Psoas muscle (tissue), 8 donors: ENCODE measurements at regions of chr4 and their contacts with region 1.

Region 1: GRCh38 chr4:1693129-1693896 is 9.2 kb upstream of the FAM53A start:
- DNase-seq: peak; percentile 68 to 85
- ATAC-seq: peak; percentile 92 to 97 (median 94)
- H3K4me3 ChIP-seq: no peak overlapping the region
- H3K27ac ChIP-seq: no peak overlapping the region
- H3K4me1 ChIP-seq: peaks cover 10% of the 10 kb centered on the region
- H3K27me3 ChIP-seq: no peaks in the 10 kb centered on the region
- CTCF ChIP-seq: peak; percentile 94

Region 2: DNA sequence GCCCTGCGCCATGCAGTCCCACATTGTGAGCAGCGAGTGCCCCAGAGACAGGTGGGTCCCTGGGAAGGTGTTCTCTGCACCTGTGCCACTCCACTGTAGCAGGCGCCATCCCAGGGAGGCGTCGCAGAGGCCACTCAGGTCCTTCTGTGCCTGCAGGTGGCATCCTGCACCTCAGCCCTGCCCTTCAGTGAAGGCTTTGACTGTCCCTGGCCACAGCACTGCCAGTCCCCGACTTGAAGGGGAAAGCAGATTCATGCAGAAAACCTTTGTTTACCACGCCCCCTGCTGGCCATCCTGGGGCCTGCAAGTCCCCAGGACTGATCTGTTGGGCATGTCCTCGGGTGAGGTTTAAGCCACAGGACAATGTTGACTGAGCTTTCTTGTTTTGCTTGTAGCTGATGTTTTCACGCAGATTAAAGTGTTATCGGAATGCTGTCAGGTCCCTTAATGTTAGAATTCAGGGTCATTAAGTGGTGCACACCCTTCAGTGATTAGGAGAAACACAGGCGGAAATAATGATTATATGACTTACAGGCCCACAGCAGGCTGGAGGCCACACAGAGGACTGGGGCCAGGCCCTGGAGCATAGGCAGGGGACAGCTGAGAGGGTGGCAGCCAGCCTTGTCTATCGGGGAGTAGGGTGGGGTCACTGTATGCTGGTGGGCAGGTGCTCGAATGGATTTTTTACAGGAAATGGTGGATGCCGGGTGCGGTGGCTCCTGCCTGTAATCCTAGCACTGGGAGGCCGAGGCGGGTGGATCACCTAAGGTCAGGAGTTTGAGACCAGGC is 33.0 kb after region 1 on chr4:
- intact Hi-C with region 1: loop called (anchors 1 to 5 kb)
- DNase-seq: peak; percentile 90 to 92
- ATAC-seq: peak; percentile 67 to 81 (median 77)
- H3K4me3 ChIP-seq: no peak overlapping the region
- H3K27ac ChIP-seq: peak overlapping the region; percentile 19
- H3K4me1 ChIP-seq: peaks cover 12% of the 10 kb centered on the region
- H3K27me3 ChIP-seq: no peaks in the 10 kb centered on the region
- CTCF ChIP-seq: peak; percentile 98

Region 3: DNA sequence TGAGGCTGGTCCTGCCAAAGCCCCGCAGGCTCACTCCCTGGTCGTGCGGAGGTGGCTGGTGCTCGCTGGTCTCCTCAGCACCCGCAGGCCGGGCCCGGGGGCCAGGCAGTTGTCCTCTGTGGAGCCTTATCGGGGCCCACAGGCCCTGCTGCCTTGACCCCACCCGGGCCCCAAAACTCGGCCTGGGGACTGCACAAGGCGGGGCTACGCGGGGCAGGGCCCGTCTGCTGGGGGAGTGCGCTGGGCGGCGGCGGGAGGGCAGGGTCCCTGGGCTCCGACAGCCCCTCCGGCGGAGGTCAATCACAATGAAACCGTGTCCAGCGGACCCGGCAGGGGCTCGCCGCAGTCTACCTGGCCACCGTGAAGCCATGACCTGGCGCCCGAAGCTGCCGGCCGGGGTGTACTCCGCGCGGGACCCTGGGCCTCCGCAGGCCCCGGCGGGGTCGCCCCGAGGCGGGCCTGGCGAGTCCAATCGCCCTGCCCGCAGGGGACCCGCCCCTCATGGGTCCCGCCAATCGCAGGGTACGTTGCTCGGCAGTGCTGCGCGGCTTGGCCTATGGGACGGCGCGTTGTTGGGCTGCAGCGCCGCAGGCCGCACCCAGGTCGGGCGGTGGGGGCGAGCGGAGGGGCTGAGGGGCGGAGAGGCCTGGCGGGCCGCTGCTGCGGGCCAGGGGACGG is 1150.1 kb after region 1 on chr4 and contains the start of gene ADD1:
- intact Hi-C with region 1: no loop called
- DNase-seq: peak; percentile 90 to 95
- ATAC-seq: peak; percentile 96 to 99 (median 98)
- H3K4me3 ChIP-seq: peak within 1 kb of the TSS; percentile 81
- H3K27ac ChIP-seq: peak within 1 kb of the TSS; percentile 89
- H3K4me1 ChIP-seq: peaks cover 41% of the 10 kb centered on the region
- H3K27me3 ChIP-seq: no peaks in the 10 kb centered on the region
- CTCF ChIP-seq: no peak
- total RNA-seq, gene ADD1: 163 to 214 (median 187) TPM